ENCODE measurements at regions of chr21 and their contacts with region 1.

Region 1: DNA sequence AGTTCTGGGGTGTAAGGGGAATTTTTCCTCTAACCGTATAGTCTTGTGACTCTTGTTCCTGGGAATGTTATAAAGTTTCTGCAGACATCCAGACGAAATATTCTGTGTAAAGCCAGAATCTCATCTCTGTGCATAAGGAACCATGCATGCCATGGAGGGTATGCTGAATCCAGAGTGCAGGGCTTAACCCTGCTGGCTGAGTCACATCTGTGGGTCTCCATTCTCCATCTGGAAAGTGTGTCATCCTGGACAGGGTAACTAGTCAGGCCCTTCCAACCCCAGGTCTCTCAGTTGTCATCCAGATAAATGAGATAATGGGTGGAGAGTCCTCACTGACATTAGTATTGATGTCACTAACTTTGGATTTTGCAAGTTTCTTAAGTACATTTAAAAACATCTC is 48.8 kb downstream of the ATP5PO start:
- DNase-seq: no peak
- ATAC-seq: no peak
- H3K4me3 ChIP-seq: no peak overlapping the region
- H3K27ac ChIP-seq: no peak overlapping the region
- H3K4me1 ChIP-seq: no peaks in the 10 kb centered on the region
- H3K27me3 ChIP-seq: no peaks in the 10 kb centered on the region
- CTCF ChIP-seq: no peak
- POLR2A ChIP-seq: no peak

Region 2: GRCh38 chr21:33998402-33998801 is 131.6 kb after region 1 on chr21:
- in situ Hi-C with region 1: no loop called
- intact Hi-C with region 1: no loop called
- DNase-seq: no peak
- ATAC-seq: no peak
- H3K4me3 ChIP-seq: no peak overlapping the region
- H3K27ac ChIP-seq: no peak overlapping the region
- H3K4me1 ChIP-seq: no peaks in the 10 kb centered on the region
- H3K27me3 ChIP-seq: no peaks in the 10 kb centered on the region
- CTCF ChIP-seq: no peak
- POLR2A ChIP-seq: no peak

Region 3: GRCh38 chr21:35275760-35276159 is 1408.9 kb after region 1 on chr21:
- in situ Hi-C with region 1: no loop called
- intact Hi-C with region 1: loop called (anchors 5 kb)
- DNase-seq: no peak
- ATAC-seq: no peak
- H3K4me3 ChIP-seq: no peak overlapping the region
- H3K27ac ChIP-seq: no peak overlapping the region
- H3K4me1 ChIP-seq: no peaks in the 10 kb centered on the region
- H3K27me3 ChIP-seq: no peaks in the 10 kb centered on the region
- CTCF ChIP-seq: no peak
- POLR2A ChIP-seq: no peak